ENCODE measurements at regions of chr3 and their contacts with region 1.

Region 1: DNA sequence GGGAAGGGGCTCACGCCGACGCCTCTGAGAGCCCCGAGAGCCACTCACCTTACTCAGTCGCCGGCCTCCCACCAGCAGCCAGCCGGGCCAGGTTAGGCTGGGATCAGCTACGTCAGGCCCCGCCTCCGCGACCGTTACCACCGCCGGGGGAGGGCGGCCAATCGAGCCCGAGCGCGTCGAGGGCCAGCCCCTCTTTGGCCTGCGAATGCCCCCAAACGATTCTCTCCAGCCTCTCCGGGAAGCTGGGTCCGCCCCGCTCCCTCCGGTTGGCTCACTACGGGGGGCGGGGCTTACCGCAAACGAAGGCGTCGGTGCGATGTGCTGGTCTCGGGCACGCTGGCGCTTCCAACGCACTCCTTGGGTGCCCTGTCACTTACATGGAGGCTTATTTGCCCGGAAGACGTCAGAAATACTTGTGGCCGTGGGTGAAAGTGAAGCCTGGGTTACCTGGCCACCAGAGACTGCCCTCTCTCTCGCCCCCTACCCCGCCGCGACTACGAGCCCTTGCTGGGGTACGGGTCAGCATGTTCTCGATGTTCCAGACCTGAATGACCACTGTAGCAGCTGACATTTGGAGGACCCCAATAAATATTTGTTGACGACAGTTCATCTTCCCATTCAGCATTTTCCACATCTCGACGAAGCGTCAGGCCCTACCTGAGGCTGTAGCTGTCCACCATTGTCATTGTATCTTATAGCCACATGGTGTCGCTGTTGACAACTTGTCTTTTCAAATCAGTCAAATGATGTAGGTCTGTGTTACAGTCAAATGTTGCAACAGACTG is at the start of gene CEP70:
- DNase-seq: peak; percentile 93
- ATAC-seq: peak; percentile 93
- H3K4me3 Mint-ChIP-seq: peak within 1 kb of the TSS; percentile 82
- H3K27ac Mint-ChIP-seq: peak within 1 kb of the TSS; percentile 91
- H3K4me1 Mint-ChIP-seq: peaks cover 8% of the 10 kb centered on the region
- H3K27me3 Mint-ChIP-seq: no peaks in the 10 kb centered on the region
- total RNA-seq, gene CEP70: 9.3 to 11.4 TPM

Region 2: GRCh38 chr3:138174421-138175122 is 419.8 kb before region 1 on chr3 and contains the start of gene DBR1:
- CTCF ChIA-PET with region 1: no interaction called
- POLR2A ChIA-PET with region 1: no interaction called
- intact Hi-C with region 1: loop called in 1 of 2 experiments (anchors 2 kb)
- DNase-seq: peak; percentile 85
- ATAC-seq: peak; percentile 85
- H3K4me3 Mint-ChIP-seq: peak within 1 kb of the TSS; percentile 89
- H3K27ac Mint-ChIP-seq: peak within 1 kb of the TSS; percentile 96
- H3K4me1 Mint-ChIP-seq: peaks cover 30% of the 10 kb centered on the region
- H3K27me3 Mint-ChIP-seq: no peaks in the 10 kb centered on the region
- total RNA-seq, gene DBR1: 16.4 to 22.0 TPM

Region 3: DNA sequence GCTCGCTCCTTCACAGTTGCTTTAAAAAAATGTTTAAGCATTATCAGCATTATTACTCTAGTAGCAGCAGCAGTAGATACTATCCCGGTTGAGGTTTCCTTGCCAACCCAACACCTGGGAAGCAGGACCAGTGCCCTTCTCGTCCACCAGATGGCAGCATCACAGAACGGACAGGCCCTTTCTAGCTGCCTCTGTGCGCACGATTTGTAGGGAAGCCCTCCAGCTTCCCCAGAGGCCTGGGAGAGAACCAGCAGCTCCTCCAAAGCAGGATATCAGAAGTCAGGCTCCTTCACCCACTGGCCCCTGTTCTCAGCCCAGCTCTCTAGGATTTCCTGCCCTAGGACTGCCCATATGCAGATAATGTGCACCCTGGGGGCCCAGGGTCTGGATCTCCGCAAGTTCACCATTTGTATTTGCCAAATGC is 176.8 kb before region 1 on chr3:
- CTCF ChIA-PET with region 1: interaction called, 5 read pairs
- POLR2A ChIA-PET with region 1: no interaction called
- intact Hi-C with region 1: loop called in 1 of 2 experiments (anchors 2 kb)
- DNase-seq: peak; percentile 80
- ATAC-seq: peak; percentile 87
- H3K4me3 Mint-ChIP-seq: no peak overlapping the region
- H3K27ac Mint-ChIP-seq: no peak overlapping the region
- H3K4me1 Mint-ChIP-seq: peaks cover 4% of the 10 kb centered on the region
- H3K27me3 Mint-ChIP-seq: peaks cover 9% of the 10 kb centered on the region

Region 4: DNA sequence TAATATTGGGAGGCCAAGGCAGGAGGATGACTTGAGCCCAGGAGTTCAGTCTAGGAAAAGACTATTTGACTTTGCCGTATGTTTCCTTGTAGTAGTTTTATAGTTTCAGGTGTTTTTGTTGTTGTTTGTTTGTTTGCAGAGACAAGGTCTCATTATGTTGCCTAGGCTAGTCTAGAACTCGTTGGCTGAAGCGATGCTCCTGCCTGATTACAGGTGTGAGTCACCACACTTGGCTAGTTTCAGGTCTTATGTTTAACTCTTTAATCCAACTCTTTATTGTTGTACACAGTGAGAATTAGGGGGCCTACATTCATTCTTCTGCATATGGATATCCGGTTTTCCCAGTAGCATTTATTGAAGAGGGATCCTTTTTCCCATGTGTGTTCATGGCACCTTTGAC is 46.2 kb after region 1 on chr3:
- CTCF ChIA-PET with region 1: no interaction called
- POLR2A ChIA-PET with region 1: no interaction called
- intact Hi-C with region 1: no loop called
- DNase-seq: no peak
- ATAC-seq: no peak
- H3K4me3 Mint-ChIP-seq: no peak overlapping the region
- H3K27ac Mint-ChIP-seq: no peak overlapping the region
- H3K4me1 Mint-ChIP-seq: no peaks in the 10 kb centered on the region
- H3K27me3 Mint-ChIP-seq: no peaks in the 10 kb centered on the region

Region 5: DNA sequence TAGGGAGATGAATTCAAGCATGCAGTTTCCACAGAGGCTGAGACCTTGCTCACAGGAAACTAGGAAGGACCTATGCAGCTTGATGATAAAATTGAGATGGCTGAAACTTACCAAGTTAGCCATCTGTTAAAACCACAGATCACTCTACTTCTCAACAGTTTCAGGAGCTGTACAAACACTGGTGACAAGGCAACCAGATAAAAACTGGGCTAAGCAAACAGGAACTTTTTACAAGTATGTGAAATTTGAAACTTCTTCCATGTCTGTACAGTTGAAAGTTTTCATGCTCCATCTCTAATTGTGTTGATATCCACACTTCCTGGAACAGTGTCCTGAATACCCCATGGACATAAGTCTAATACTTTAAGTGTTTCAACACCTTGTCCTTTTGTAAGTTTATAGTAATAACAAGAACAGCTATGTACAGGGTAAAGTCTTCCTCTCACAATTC is 92.5 kb after region 1 on chr3:
- CTCF ChIA-PET with region 1: interaction called, 4 read pairs
- POLR2A ChIA-PET with region 1: no interaction called
- intact Hi-C with region 1: loop called in 1 of 2 experiments (anchors 5 kb)
- DNase-seq: no peak
- ATAC-seq: peak; percentile 69
- H3K4me3 Mint-ChIP-seq: no peak overlapping the region
- H3K27ac Mint-ChIP-seq: peak overlapping the region; percentile 77
- H3K4me1 Mint-ChIP-seq: peaks cover 12% of the 10 kb centered on the region
- H3K27me3 Mint-ChIP-seq: no peaks in the 10 kb centered on the region

Region 6: GRCh38 chr3:138862924-138863775 is 268.8 kb after region 1 on chr3:
- CTCF ChIA-PET with region 1: no interaction called
- POLR2A ChIA-PET with region 1: interaction called, 10 read pairs
- intact Hi-C with region 1: no loop called
- DNase-seq: peak; percentile 30
- ATAC-seq: peak; percentile 80
- H3K4me3 Mint-ChIP-seq: no peak overlapping the region
- H3K27ac Mint-ChIP-seq: no peak overlapping the region
- H3K4me1 Mint-ChIP-seq: peaks cover 4% of the 10 kb centered on the region
- H3K27me3 Mint-ChIP-seq: no peaks in the 10 kb centered on the region

Region 7: GRCh38 chr3:138935848-138936740 is 341.8 kb after region 1 on chr3:
- CTCF ChIA-PET with region 1: interaction called, 11 read pairs
- POLR2A ChIA-PET with region 1: no interaction called
- intact Hi-C with region 1: no loop called
- DNase-seq: peak; percentile 84
- ATAC-seq: peak; percentile 73
- H3K4me3 Mint-ChIP-seq: peak overlapping the region; percentile 63
- H3K27ac Mint-ChIP-seq: no peak overlapping the region
- H3K4me1 Mint-ChIP-seq: peaks cover 25% of the 10 kb centered on the region
- H3K27me3 Mint-ChIP-seq: peaks cover 61% of the 10 kb centered on the region